Activated CD8-positive, alpha-beta T cell treated with anti-CD3 and anti-CD28 coated beads for 36 hours (primary cell): ENCODE measurements at regions of chr5 and their contacts with region 1.

Region 1: DNA sequence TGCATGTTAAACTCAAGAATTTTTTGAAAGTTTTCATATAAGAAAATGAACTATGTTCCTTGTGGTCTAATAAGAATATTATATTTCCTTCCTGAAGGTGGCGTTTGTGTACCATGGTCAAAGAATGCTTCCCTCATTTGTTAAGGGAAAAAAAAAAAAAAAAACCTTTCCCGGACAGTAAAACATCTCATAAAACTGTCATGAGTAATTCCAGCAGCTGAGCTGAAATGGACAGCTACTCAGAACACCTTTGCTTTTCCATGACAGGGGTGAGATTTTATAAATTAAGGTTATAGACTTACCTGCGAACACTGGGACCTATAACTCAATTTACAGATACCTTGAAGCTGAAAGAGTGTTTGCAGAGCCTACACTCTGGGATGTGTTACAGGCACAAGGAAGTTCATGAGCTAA is 113.2 kb upstream of the RANBP3L start:
- DNase-seq: no peak
- ATAC-seq: no peak
- H3K4me3 Mint-ChIP-seq: no peak overlapping the region
- H3K27ac Mint-ChIP-seq: no peak overlapping the region
- H3K4me1 Mint-ChIP-seq: peaks cover 3% of the 10 kb centered on the region
- H3K27me3 Mint-ChIP-seq: no peaks in the 10 kb centered on the region
- CTCF ChIP-seq: no peak

Region 2: GRCh38 chr5:36311956-36312355 is 102.9 kb before region 1 on chr5:
- CTCF ChIA-PET with region 1: no interaction called
- POLR2A ChIA-PET with region 1: no interaction called
- intact Hi-C with region 1: no loop called
- DNase-seq: no peak
- ATAC-seq: no peak
- H3K4me3 Mint-ChIP-seq: no peak overlapping the region
- H3K27ac Mint-ChIP-seq: no peak overlapping the region
- H3K4me1 Mint-ChIP-seq: no peaks in the 10 kb centered on the region
- H3K27me3 Mint-ChIP-seq: peaks cover 3% of the 10 kb centered on the region
- CTCF ChIP-seq: no peak

Region 3: DNA sequence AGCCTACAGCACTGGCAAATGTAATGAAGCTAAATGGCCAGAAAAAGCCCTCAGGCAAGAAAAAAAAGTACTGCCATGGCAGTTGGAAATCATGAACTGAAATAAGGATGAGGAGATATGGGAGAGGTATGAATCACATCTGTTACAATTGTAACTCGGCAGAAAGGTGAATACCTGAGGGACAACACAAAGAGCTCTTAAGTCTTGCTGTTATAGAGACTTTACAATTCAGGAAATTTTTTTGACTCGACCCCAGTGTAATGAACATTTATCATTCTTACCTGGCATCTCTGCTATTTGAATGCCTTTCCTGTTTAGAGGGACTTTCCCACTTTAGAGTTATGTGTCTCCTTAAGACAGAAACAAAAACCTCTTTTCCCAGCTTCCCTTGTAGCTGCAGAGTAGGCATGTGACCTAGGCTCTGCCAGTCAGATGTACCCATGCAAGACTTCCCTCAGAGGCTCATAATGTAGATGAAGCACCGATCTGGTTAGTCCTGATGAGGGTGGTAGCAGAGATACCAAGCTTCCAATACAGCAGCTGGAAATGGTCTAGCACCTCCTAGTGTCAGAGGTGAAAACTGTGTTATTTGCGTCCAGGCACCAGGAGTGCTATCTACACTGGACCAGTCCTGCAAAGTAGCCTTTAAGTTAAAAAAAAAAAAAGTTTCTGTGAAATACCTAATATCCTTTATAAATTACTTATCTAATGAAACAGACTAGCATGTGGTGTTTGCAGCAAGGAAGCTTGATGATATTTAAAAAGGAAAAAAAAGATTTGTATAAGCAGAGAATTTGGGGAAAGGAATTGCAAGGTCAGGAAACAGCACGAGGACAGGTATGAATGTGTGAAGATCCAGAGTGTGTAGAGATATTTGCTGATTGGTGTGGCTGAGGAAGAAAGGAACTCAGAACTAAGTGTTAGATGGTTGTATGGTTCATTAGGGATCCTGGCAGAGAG is 44.6 kb after region 1 on chr5:
- CTCF ChIA-PET with region 1: no interaction called
- POLR2A ChIA-PET with region 1: no interaction called
- intact Hi-C with region 1: no loop called
- DNase-seq: no peak
- ATAC-seq: peak; percentile 13
- H3K4me3 Mint-ChIP-seq: no peak overlapping the region
- H3K27ac Mint-ChIP-seq: no peak overlapping the region
- H3K4me1 Mint-ChIP-seq: no peaks in the 10 kb centered on the region
- H3K27me3 Mint-ChIP-seq: peaks cover 3% of the 10 kb centered on the region
- CTCF ChIP-seq: peak; percentile 24

Region 4: DNA sequence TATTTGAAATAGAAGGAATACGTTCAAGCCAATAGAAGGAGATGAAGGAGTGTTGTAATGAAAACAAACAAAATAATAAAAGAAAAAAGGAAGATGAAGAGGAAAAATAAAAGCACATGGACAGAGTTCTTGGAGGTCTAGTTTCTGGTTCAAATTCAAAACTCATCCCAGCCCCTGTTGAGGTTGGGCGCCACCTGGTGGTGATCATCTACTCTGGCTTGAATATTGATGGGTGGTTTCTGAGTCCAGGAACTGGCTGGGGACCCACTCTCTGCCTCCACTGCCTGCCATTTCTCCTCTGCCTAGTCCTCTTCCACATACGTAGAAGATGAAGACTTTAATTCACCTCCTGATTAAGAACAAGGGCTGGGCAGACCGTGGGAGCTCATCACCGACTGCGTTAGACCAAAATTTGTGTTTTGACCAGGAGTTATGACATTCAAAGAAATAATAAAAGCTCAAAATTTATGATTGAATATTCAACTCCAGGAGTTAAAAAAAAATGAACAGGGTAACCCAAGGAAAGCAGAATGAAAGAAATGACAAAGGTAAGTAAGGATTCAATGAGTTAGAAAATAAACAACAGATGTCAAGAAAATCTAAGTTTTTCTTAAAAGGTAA is 92.6 kb after region 1 on chr5:
- CTCF ChIA-PET with region 1: interaction called, 43 read pairs
- POLR2A ChIA-PET with region 1: no interaction called
- intact Hi-C with region 1: loop called (anchors 5 kb)
- DNase-seq: peak; percentile 86
- ATAC-seq: no peak
- H3K4me3 Mint-ChIP-seq: no peak overlapping the region
- H3K27ac Mint-ChIP-seq: no peak overlapping the region
- H3K4me1 Mint-ChIP-seq: no peaks in the 10 kb centered on the region
- H3K27me3 Mint-ChIP-seq: peaks cover 7% of the 10 kb centered on the region
- CTCF ChIP-seq: peak; percentile 85